Activated naive CD4-positive, alpha-beta T cell treated with anti-CD3 and anti-CD28 coated beads, Interleukin-2, amount 10 ng/mL, durations not matched to agents 7 days and 5 days (primary cell): ENCODE measurements at regions of chr4 and their contacts with region 1.

Region 1: DNA sequence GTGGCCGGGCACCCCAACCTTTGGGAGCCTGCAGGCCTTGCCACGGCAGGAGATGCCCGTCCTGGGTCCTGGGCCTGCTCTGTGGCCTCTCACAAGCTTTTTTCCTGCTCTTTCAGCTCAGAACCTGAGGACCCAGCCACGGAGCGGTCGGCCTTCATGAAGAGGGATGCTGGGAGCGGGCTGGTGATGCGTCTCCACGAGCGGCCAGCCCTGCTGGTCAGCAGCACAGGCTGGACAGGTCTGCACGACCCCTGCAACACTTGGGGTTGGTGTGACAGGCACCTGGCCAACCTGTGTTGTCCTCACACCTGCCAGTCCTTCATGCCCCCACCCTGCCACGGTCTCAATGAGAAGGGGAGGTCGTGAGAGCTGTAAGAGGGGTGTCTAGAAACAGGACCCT is 170.0 kb downstream of the ADRA2C start:
- DNase-seq: no peak
- H3K4me3 Mint-ChIP-seq: no peak overlapping the region
- H3K27ac Mint-ChIP-seq: no peak overlapping the region
- H3K4me1 Mint-ChIP-seq: peaks cover 8% of the 10 kb centered on the region
- H3K27me3 Mint-ChIP-seq: peaks cover 3% of the 10 kb centered on the region

Region 2: DNA sequence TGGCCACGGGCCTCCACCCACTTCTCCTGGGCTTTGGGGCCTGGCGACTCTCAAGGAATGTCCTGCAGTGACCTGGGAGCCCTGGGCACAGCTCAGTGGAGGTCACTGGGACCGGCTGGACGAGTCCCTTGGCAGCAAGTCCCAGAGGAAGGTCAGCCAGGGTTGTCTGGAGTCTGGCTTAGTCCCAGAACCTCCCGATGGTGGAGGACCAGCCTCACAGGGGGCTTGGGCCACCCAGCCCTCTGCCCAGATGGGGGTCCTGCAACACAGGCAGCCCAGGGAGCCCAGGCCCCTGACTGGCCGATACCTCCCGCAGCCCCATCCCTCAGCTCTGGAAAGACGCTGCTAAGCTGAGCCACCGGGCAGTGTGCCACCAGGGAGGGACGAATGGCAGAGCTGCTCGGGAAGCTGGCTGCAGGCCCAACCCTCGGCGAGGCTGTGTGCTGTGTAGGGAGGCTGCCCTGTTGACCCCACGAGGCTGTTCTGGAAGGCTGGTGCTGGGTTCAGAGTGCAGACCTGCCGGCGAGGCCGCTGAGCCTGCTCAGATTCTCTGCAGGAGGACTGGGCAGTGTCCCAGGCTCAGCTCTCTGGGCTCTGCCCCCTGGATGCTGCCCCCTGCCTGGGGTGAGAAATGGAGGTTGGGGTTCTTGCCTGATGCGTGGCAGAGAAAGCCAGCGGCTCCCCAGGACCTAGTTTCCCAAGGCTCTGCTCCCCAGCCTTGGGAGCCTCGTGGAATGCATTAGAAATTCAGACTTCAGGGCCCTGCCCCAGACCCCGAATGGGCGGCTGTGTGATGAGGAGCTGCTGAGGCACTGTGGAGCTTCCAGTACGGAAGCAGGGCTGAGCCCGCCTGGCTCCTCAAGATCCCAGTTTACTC is 108.3 kb before region 1 on chr4:
- CTCF ChIA-PET with region 1: no interaction called
- DNase-seq: no peak
- H3K4me3 Mint-ChIP-seq: no peak overlapping the region
- H3K27ac Mint-ChIP-seq: no peak overlapping the region
- H3K4me1 Mint-ChIP-seq: no peaks in the 10 kb centered on the region
- H3K27me3 Mint-ChIP-seq: no peaks in the 10 kb centered on the region

Region 3: DNA sequence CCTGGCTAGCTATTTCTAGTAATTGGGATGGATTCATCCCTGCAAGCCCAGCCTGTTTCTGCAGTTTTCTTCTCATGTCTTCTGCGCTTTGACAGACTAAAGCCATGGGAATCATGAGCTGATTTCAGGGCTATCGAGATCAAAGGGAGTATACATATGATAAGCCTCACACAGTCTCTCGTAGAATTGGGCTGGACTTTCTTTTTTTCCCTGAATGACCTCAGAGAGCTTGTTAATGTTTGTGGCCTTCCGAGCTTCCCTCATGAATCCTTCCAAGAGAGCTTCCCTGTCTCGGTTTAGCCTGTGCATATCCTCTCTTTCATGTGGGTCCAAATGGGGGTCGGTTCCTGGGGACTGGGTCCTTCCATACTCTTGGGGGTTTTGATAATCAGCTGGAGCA is 39.7 kb before region 1 on chr4:
- CTCF ChIA-PET with region 1: interaction called, 13 read pairs
- DNase-seq: no peak
- H3K4me3 Mint-ChIP-seq: no peak overlapping the region
- H3K27ac Mint-ChIP-seq: no peak overlapping the region
- H3K4me1 Mint-ChIP-seq: no peaks in the 10 kb centered on the region
- H3K27me3 Mint-ChIP-seq: peaks cover 5% of the 10 kb centered on the region

Region 4: GRCh38 chr4:4559596-4559995 is 623.4 kb after region 1 on chr4:
- CTCF ChIA-PET with region 1: no interaction called
- DNase-seq: no peak
- H3K4me3 Mint-ChIP-seq: no peak overlapping the region
- H3K27ac Mint-ChIP-seq: no peak overlapping the region
- H3K4me1 Mint-ChIP-seq: no peaks in the 10 kb centered on the region
- H3K27me3 Mint-ChIP-seq: no peaks in the 10 kb centered on the region